Right cardiac atrium (tissue), 5 donors: ENCODE measurements at regions of chr10 and their contacts with region 1.

Region 1: DNA sequence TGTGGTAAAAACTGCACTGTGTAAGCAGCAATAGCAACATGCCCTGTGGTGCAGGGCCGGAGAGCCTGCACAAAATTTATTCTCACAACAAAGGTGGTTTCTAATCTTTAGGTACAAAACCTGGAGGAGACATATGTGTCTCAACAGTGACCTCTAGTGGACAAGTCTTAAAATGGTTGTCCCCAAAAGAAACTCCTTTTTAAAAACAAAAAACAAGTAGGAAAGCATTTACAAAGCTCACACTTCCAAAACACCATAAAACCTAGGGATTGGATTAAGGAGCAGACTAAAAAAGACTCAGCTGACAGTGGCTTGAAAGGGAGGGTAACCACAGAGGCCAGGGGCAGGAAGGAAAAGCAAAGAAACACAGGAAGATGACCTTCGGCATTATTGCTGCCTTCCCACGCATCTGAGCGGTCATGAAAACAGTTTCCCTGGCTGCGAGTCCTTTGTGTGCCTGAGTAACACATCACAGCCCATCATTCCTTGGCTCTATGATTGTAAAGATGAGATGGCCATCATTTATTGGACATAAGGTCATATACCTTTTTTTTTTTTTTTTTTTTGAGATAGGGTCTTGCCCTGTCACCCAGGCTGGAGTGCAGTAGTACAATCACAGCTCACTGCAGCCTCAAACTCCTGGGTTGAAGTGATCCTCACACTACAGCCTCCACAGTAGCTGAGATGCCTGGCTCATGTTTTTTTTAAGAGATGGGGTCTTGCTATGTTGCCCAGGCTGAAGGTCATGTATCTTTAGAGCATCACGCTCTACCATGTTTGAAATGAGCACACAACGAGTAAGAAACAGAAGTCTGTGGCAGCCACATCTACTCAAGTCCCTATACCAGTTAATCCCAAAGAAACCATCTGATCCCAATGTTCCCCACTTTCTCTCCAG is 39.5 kb downstream of the RSU1 start:
- DNase-seq: peak in 1 of 3 donors; percentile 24
- ATAC-seq: peak; percentile 62 to 95
- H3K4me3 ChIP-seq: no peak overlapping the region
- H3K27ac ChIP-seq: no peak overlapping the region
- H3K4me1 ChIP-seq: peaks cover 2% of the 10 kb centered on the region
- H3K27me3 ChIP-seq: no peaks in the 10 kb centered on the region

Region 2: DNA sequence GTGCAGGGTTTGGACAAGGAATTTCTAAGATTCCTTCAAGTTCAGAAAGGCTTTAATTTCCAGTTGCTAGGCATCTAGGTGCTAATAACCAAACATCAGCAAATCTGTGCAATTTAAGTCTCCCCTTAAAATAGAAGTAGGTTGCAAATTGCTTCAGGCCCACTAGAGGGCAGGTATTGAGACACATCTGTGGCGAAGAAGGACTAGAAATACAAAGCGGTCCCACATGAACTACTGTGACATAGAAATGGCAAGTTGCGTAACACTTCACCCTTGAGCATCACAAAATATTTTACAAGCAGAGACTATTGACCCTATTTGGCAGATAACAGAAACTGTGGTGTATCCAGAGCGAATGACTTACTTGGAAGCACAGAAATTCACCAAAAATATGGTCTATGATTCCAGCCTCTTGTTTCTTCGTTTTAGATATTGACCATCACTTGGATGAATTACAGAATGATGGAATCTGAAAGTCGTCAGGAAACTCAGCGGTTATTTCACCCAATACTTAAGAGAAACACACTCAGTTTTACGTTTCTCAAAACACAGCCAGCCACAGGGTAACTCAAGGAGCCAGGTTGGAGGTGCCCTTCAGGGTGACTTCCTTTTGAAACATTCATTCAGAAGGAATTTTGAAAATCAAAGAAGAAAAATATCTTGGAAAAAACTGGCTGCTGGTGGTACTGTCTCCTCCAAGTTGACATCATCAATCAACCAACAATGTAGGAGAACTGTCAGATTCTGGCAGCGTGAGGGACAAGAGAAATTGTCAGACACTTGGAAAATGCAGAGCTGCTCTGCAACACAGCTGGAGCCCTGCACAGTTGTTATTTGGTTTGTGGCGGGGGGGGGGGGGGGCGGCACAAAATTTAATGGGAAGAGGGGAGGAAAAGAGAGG is 661.1 kb before region 1 on chr10:
- intact Hi-C with region 1: loop called in 1 of 4 experiments (anchors 5 kb)
- DNase-seq: no peak
- ATAC-seq: no peak
- H3K4me3 ChIP-seq: no peak overlapping the region
- H3K27ac ChIP-seq: no peak overlapping the region
- H3K4me1 ChIP-seq: no peaks in the 10 kb centered on the region
- H3K27me3 ChIP-seq: no peaks in the 10 kb centered on the region